ENCODE measurements at regions of chr15 and their contacts with region 1.

Region 1: GRCh38 chr15:33132722-33133345 is 61.7 kb downstream of the FMN1 start:
- DNase-seq: peak; percentile 38
- ATAC-seq: peak; percentile 96
- H3K4me3 ChIP-seq: no peak overlapping the region
- H3K27ac ChIP-seq: no peak overlapping the region
- H3K4me1 ChIP-seq: peaks cover 8% of the 10 kb centered on the region
- H3K27me3 ChIP-seq: no peaks in the 10 kb centered on the region
- CTCF ChIP-seq: peak; percentile 87

Region 2: GRCh38 chr15:32659340-32660155 is 473.3 kb before region 1 on chr15:
- CTCF ChIA-PET with region 1: interaction called, 3 read pairs
- POLR2A ChIA-PET with region 1: no interaction called
- in situ Hi-C with region 1: no loop called
- intact Hi-C with region 1: loop called (anchors 5 kb)
- DNase-seq: peak; percentile 51
- ATAC-seq: peak; percentile 84
- H3K4me3 ChIP-seq: no peak overlapping the region
- H3K27ac ChIP-seq: no peak overlapping the region; the same call in 1 of the 2 replicates
- H3K4me1 ChIP-seq: peaks cover 6% of the 10 kb centered on the region; the same call in 1 of the 2 replicates
- H3K27me3 ChIP-seq: no peaks in the 10 kb centered on the region
- CTCF ChIP-seq: peak; percentile 4; the same call in 1 of the 2 replicates

Region 3: GRCh38 chr15:32738666-32739065 is 394.2 kb before region 1 on chr15:
- CTCF ChIA-PET with region 1: interaction called, 19 read pairs
- POLR2A ChIA-PET with region 1: no interaction called
- in situ Hi-C with region 1: no loop called
- intact Hi-C with region 1: no loop called
- DNase-seq: no peak
- ATAC-seq: no peak
- H3K4me3 ChIP-seq: no peak overlapping the region
- H3K27ac ChIP-seq: no peak overlapping the region
- H3K4me1 ChIP-seq: no peaks in the 10 kb centered on the region
- H3K27me3 ChIP-seq: no peaks in the 10 kb centered on the region
- CTCF ChIP-seq: no peak

Region 4: GRCh38 chr15:33021806-33022389 is 110.9 kb before region 1 on chr15:
- CTCF ChIA-PET with region 1: interaction called, 3 read pairs
- POLR2A ChIA-PET with region 1: no interaction called
- in situ Hi-C with region 1: no loop called
- intact Hi-C with region 1: loop called (anchors 2 kb)
- DNase-seq: no peak
- ATAC-seq: no peak
- H3K4me3 ChIP-seq: no peak overlapping the region
- H3K27ac ChIP-seq: no peak overlapping the region
- H3K4me1 ChIP-seq: 0 out of 2 replicates have a peak, but pooled peaks cover 3% of the 10 kb centered on the region
- H3K27me3 ChIP-seq: no peaks in the 10 kb centered on the region
- CTCF ChIP-seq: peak; percentile 73; the same call in 1 of the 2 replicates

Region 5: GRCh38 chr15:33086507-33087121 is 46.2 kb before region 1 on chr15:
- CTCF ChIA-PET with region 1: interaction called, 10 read pairs
- POLR2A ChIA-PET with region 1: no interaction called
- in situ Hi-C with region 1: no loop called
- intact Hi-C with region 1: loop called (anchors 1 kb)
- DNase-seq: peak; percentile 30
- ATAC-seq: peak; percentile 93
- H3K4me3 ChIP-seq: no peak overlapping the region
- H3K27ac ChIP-seq: no peak overlapping the region
- H3K4me1 ChIP-seq: no peaks in the 10 kb centered on the region
- H3K27me3 ChIP-seq: no peaks in the 10 kb centered on the region
- CTCF ChIP-seq: peak; percentile 71; the same call in 1 of the 2 replicates

Region 6: GRCh38 chr15:33150998-33151397 is 18.2 kb after region 1 on chr15:
- CTCF ChIA-PET with region 1: interaction called, 10 read pairs
- POLR2A ChIA-PET with region 1: no interaction called
- in situ Hi-C with region 1: no loop called
- intact Hi-C with region 1: no loop called
- DNase-seq: no peak
- ATAC-seq: no peak
- H3K4me3 ChIP-seq: peak overlapping the region in 1 of 2 experiments; percentile 13; a peak in 1 of 4 replicates
- H3K27ac ChIP-seq: no peak overlapping the region
- H3K4me1 ChIP-seq: no peaks in the 10 kb centered on the region
- H3K27me3 ChIP-seq: no peaks in the 10 kb centered on the region
- CTCF ChIP-seq: no peak

Region 7: DNA sequence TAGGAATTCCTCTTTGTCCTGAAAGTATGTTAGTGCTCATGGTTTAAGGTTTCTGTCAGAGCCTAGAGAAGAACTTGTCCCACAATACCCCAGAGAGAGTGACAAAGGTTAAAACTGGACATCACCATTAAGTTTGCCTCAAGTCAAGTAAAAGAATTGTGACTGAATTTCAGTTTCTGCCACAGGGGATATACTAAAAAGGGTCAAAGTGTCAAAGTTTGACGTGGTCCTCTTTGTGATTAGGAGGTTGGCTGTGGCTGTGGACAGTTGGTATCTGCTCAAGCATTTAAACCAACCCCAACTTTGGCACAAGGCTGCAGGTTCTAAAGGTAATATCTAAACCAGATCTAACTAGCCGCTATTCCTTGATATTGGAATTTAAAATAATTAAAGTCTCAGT is 35.6 kb after region 1 on chr15:
- CTCF ChIA-PET with region 1: no interaction called
- POLR2A ChIA-PET with region 1: no interaction called
- in situ Hi-C with region 1: no loop called
- intact Hi-C with region 1: no loop called
- DNase-seq: no peak
- ATAC-seq: no peak
- H3K4me3 ChIP-seq: no peak overlapping the region
- H3K27ac ChIP-seq: no peak overlapping the region
- H3K4me1 ChIP-seq: no peaks in the 10 kb centered on the region
- H3K27me3 ChIP-seq: no peaks in the 10 kb centered on the region
- CTCF ChIP-seq: no peak

Region 8: DNA sequence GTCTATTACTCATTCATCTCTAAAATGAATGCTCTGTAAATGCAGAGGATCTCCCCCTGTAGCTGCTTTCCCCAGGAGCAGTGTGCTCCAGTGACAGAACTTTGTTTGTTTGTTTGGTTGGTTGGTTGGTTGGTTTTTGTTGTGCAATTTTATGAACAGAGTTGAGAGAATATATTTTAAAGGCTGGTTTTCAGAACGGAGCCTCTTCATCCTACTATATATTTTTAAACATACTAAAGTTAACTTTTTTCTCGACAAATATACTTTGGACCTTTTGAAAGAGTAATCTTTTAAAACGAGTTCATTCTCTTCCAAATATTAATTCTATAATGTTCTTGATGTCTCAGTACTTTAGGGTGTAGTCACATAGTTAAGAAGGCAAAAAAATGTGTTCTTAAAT is 198.1 kb after region 1 on chr15:
- CTCF ChIA-PET with region 1: no interaction called
- POLR2A ChIA-PET with region 1: no interaction called
- in situ Hi-C with region 1: no loop called
- intact Hi-C with region 1: no loop called
- DNase-seq: no peak
- ATAC-seq: no peak
- H3K4me3 ChIP-seq: no peak overlapping the region
- H3K27ac ChIP-seq: no peak overlapping the region
- H3K4me1 ChIP-seq: no peaks in the 10 kb centered on the region
- H3K27me3 ChIP-seq: peaks cover 16% of the 10 kb centered on the region
- CTCF ChIP-seq: no peak

Region 9: DNA sequence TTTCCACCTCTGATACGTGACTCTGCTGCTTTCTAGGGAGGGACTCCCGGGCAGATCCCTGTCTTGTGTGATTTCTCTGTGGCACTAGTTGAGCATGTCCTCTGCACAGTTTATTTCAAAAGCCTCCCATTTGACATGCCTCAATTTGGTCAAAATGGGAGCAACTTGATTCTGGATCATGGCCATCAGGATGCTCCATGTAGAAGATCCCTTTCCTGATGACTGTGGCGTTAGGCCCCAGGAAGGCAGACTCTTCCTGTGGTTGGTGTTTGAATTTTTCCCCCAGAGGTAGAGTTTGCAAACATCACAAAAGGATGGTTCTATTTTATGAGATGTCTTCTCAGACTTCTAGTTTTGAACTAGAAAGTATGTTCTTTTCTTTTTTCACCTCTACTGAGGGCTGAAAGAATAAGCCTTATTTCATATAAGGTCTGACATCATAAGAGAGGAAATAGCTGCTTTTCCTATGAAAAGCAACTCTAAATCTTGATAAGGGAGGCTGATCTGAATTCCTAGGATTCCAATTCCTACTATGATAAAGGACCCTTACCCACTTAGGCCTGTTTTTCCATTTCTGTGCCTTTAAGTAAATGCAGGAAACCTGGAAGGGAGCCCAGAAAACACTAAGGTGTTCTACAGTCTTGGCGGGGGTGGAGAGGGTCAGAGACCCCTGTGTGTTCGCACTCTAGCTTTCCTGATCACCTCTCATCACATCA is 591.6 kb after region 1 on chr15:
- CTCF ChIA-PET with region 1: no interaction called
- POLR2A ChIA-PET with region 1: interaction called, 17 read pairs
- in situ Hi-C with region 1: no loop called
- intact Hi-C with region 1: no loop called
- DNase-seq: no peak
- ATAC-seq: no peak
- H3K4me3 ChIP-seq: no peak overlapping the region
- H3K27ac ChIP-seq: no peak overlapping the region
- H3K4me1 ChIP-seq: no peaks in the 10 kb centered on the region
- H3K27me3 ChIP-seq: no peaks in the 10 kb centered on the region
- CTCF ChIP-seq: no peak

Region 10: GRCh38 chr15:34018021-34018645 is 885.3 kb after region 1 on chr15:
- CTCF ChIA-PET with region 1: no interaction called
- POLR2A ChIA-PET with region 1: no interaction called
- in situ Hi-C with region 1: no loop called
- intact Hi-C with region 1: no loop called
- DNase-seq: no peak
- ATAC-seq: no peak
- H3K4me3 ChIP-seq: no peak overlapping the region
- H3K27ac ChIP-seq: no peak overlapping the region
- H3K4me1 ChIP-seq: no peaks in the 10 kb centered on the region
- H3K27me3 ChIP-seq: no peaks in the 10 kb centered on the region
- CTCF ChIP-seq: no peak